ENCODE measurements at regions of chr2 and their contacts with region 1.

Region 1: DNA sequence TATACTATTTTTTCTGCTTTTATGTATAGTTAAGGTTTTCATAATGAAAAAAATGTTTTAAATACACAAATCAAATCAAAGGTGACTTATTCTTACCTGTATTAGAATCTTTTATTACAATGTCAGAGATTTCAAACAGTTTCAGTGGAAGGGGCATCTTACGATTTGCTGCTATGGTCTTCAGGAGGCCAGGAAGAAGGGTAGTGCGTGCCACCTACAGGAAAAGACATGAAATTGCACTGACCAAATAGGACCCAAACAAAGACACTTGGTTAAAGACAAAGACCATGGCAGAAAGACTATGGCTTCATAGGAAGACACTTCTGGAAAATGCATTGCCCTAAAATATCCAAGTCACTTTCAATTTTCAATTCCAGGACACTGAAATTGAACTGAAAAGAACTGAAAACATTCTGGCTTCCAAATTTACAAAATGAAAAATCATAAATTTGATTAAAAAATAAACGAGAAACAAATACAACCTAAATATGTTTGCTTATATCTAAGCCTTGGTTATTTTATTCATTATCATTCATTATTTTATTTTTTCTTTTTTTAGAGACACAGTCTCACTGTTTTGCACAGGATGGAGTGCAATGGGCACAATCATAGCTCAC is 42.1 kb downstream of the FARSB start:
- DNase-seq: peak; percentile 57
- H3K4me3 ChIP-seq: no peak overlapping the region
- CTCF ChIP-seq: peak; percentile 85

Region 2: GRCh38 chr2:222024932-222025880 is 588.6 kb before region 1 on chr2:
- in situ Hi-C with region 1: loop called (anchors 25 kb)
- DNase-seq: peak; percentile 59
- H3K4me3 ChIP-seq: no peak overlapping the region
- CTCF ChIP-seq: peak; percentile 71

Region 3: GRCh38 chr2:222318026-222318711 is 295.7 kb before region 1 on chr2:
- in situ Hi-C with region 1: loop called (anchors 25 kb)
- DNase-seq: peak; percentile 78
- H3K4me3 ChIP-seq: peak overlapping the region; percentile 51
- CTCF ChIP-seq: peak; percentile 58

Region 4: GRCh38 chr2:222572751-222573174 is 41.1 kb before region 1 on chr2:
- in situ Hi-C with region 1: loop called (anchors 5 kb)
- DNase-seq: no peak
- H3K4me3 ChIP-seq: no peak overlapping the region
- CTCF ChIP-seq: no peak